Left cardiac atrium (tissue), 4 donors: ENCODE measurements at regions of chr20 and their contacts with region 1.

Region 1: DNA sequence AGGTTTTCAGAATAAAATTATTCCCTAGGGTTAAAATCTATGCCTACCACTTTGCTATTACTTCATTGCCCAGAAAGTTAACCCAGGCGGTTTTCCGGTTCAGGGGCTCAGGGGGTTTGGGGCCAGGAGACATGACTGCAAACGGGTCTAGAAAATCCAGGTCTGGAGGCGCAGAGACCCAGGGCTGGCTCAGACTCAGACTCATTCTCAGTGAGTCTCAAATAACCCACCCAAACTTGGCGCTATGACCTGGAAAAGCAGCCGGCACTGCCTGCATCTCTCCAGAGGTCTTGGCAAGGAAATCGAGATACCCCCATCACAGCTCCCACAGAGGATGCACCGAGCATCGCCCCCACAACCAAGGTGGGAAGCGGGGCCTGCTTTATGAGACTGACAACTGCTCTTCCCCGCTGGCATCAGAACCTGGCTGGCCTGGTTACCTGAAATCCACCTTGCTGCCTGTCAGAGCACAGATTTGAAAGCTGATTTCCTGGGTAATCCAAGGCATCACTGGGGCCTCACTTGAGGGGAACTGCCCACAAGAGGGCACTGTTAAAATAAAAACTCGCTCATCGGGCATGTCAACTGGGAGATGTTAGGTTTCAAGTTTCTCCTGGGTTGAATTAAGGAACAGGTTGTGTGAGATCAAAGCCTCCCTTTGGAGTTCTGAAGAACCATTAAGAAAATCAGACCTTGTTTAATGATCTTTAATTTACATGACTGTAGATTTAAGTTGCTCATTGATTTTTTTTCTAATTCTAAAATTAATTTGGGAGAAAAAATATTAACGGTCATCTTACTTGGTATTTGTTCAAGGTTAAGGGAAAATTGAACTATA is 55.1 kb downstream of the KIF16B start:
- DNase-seq: no peak
- ATAC-seq: peak; percentile 57 to 65

Region 2: DNA sequence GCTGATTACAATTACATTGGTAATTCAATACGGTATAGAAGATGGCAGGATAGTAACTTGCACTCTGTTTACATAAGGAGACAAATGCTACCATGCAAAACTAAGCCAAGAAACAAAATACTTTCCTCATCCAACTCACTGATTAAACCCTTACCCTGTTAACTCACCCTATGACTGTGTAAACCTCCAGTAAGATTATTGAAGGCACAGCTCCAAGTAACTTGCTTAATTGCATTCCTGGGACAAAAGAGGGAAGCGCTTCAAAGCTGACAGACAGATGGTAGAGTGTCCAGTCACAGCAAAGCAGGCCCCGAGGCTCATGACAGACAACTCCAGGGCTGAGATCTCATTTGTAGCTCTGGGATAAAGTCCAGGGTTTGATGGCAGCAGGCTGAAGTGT is 62.0 kb after region 1 on chr20:
- intact Hi-C with region 1: loop called (anchors 10 kb)
- DNase-seq: no peak
- ATAC-seq: peak; percentile 93 to 95

Region 3: DNA sequence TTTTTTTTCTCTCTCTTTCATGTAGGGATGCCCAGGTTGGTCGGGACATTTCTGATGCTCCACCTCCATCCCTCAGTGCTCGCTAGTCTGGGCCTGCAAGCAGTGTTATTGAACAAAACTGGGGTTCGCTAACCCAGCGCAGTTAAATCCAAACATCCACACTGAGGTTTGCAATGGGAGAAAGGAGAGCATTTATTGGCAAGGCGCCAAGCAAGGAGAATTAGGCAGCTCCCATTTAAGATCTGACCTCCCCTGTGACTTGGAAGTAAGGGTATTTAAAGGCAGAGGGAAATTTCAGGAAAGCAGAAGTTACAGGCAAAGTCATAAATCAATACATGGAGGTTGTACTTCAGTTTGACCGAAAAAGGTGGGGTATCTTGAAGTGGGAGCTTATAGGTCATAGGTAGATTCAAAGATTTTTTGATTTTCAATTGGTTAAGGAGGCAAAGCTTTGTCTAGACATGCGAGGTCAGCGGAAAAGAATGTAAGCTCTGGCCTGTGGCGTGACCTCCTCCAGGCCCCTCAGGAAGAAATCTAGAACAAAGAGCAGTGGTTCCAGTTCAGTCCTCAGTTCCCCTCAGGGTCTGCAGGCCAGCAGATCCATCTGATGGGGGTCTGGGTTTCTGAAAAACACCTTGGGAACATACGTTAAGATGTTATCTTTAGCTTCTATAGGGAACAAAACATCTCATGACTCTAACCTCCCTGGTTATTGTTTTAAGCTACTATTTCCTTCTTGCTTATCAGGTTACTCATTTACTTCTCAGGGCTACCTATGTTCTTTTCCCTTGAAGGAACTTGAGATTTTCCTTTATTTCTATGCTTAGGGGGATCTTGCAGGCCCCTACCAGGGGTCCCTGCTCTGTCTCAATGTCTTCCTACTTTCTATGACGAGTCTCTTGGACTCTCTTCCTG is 121.1 kb after region 1 on chr20:
- intact Hi-C with region 1: loop called in 1 of 2 experiments (anchors 1 kb)
- DNase-seq: no peak
- ATAC-seq: no peak

Region 4: GRCh38 chr20:16729565-16730456 is 211.6 kb after region 1 on chr20 and contains the start of gene SNRPB2:
- intact Hi-C with region 1: loop called in 1 of 2 experiments (anchors 10 kb)
- DNase-seq: peak; percentile 96
- ATAC-seq: peak; percentile 98 to 100
- total RNA-seq, gene SNRPB2: 31.0 to 36.5 TPM

Region 5: GRCh38 chr20:16761305-16761829 is 243.2 kb after region 1 on chr20:
- intact Hi-C with region 1: loop called (anchors 10 kb)
- DNase-seq: no peak
- ATAC-seq: peak; percentile 78 to 84